ENCODE measurements at regions of chr2 and their contacts with region 1.

Region 1: GRCh38 chr2:162333968-162334367 is 10.0 kb upstream of the GCA start:
- DNase-seq: peak; percentile 33
- ATAC-seq: peak; percentile 73
- H3K4me3 ChIP-seq: no peak overlapping the region
- H3K27ac ChIP-seq: no peak overlapping the region
- H3K4me1 ChIP-seq: no peaks in the 10 kb centered on the region
- H3K27me3 ChIP-seq: peaks cover 2% of the 10 kb centered on the region; the same call in 1 of the 2 replicates
- CTCF ChIP-seq: peak; percentile 40; the same call in 1 of the 2 replicates
- POLR2A ChIP-seq: no peak
- RAD21 ChIP-seq: peak; percentile 30

Region 2: GRCh38 chr2:162768652-162769051 is 434.7 kb after region 1 on chr2:
- CTCF ChIA-PET with region 1: no interaction called
- POLR2A ChIA-PET with region 1: no interaction called
- dilution Hi-C with region 1: no loop called
- in situ Hi-C with region 1: no loop called
- intact Hi-C with region 1: no loop called
- DNase-seq: no peak
- ATAC-seq: no peak
- H3K4me3 ChIP-seq: no peak overlapping the region
- H3K27ac ChIP-seq: no peak overlapping the region
- H3K4me1 ChIP-seq: no peaks in the 10 kb centered on the region
- H3K27me3 ChIP-seq: no peaks in the 10 kb centered on the region
- CTCF ChIP-seq: no peak
- POLR2A ChIP-seq: no peak
- RAD21 ChIP-seq: no peak

Region 3: GRCh38 chr2:163132850-163133249 is 798.9 kb after region 1 on chr2:
- CTCF ChIA-PET with region 1: no interaction called
- POLR2A ChIA-PET with region 1: no interaction called
- dilution Hi-C with region 1: no loop called
- in situ Hi-C with region 1: no loop called
- intact Hi-C with region 1: loop called (anchors 5 kb)
- DNase-seq: peak; percentile 2
- ATAC-seq: no peak
- H3K4me3 ChIP-seq: no peak overlapping the region
- H3K27ac ChIP-seq: no peak overlapping the region
- H3K4me1 ChIP-seq: no peaks in the 10 kb centered on the region
- H3K27me3 ChIP-seq: no peaks in the 10 kb centered on the region
- CTCF ChIP-seq: peak; percentile 56
- POLR2A ChIP-seq: no peak
- RAD21 ChIP-seq: peak; percentile 42

Measured in IMR-90 (cell line).